ENCODE measurements at regions of chr22 and their contacts with region 1.

Region 1: DNA sequence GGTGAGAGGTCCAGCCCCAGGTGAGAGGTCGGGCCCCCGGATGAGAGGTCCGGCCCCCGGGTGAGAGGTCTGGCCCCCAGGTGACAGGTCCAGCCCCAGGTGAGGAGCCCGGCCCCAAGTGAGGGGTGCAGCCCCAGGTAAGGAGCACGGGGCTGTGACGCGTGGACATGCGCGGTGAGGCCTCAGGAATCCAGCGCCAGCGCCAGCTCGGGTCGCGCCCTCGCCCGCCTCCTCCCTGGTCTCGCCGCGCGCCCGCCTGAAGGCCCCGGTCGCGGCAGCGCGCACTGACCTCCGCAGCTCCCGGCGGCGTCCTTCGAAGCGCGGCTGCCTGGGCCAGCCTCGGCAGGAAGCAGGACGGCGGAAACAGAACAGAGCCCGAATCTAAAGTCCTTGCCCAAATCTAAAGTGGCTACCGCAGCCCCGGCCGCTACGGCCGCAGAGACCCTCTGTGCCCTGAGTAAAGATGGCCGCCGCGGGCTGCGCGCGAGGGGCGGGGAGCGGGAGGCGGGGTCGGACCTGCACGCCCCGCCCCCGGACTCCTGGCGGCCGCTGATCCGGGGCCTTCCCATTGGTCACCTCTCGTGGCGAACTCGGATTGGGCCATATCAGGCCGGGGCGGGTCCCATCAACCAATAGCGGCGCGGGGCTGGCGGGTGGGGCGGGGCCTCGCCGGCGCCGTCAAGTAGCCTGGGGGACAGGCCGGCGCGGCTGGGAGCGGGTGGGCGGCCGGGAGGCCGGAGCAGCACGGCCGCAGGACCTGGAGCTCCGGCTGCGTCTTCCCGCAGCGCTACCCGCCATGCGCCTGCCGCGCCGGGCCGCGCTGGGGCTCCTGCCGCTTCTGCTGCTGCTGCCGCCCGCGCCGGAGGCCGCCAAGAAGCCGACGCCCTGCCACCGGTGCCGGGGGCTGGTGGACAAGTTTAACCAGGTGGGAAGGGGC is at the starts of genes ALG12 and CRELD2:
- ATAC-seq: peak; percentile 93 to 97 (median 94)
- H3K4me3 ChIP-seq: peak within 1 kb of the TSS; percentile 66 to 80 (median 76)
- H3K27ac ChIP-seq: peak within 1 kb of the TSS; percentile 95 to 96
- H3K4me1 ChIP-seq: peaks cover 10 to 12% of the 10 kb centered on the region in 2 donors
- total RNA-seq, gene ALG12: 4.8 to 13.1 (median 9.7) TPM
- total RNA-seq, gene CRELD2: 20.7 to 62.4 (median 33.3) TPM

Region 2: GRCh38 chr22:49789289-49790141 is 128.7 kb before region 1 on chr22:
- in situ Hi-C with region 1: loop called in 1 of 9 experiments (anchors 25 kb)
- ATAC-seq: peak in 2 of 8 experiments; percentile 32 to 38
- H3K4me3 ChIP-seq: no peak overlapping the region
- H3K27ac ChIP-seq: no peak overlapping the region
- H3K4me1 ChIP-seq: no peaks in the 10 kb centered on the region

Region 3: GRCh38 chr22:50236731-50237409 is 318.6 kb after region 1 on chr22:
- in situ Hi-C with region 1: no loop called
- ATAC-seq: peak in 2 of 8 experiments; percentile 18 to 53
- H3K4me3 ChIP-seq: no peak overlapping the region
- H3K27ac ChIP-seq: no peak overlapping the region
- H3K4me1 ChIP-seq: peaks cover under 1 to 13% of the 10 kb centered on the region in 2 donors